Aorta (tissue), 5 donors: ENCODE measurements at regions of chr5 and their contacts with region 1.

Region 1: GRCh38 chr5:125484742-125485641 is 738.6 kb upstream of the ZNF608 start:
- DNase-seq: peak; percentile 81 to 84
- ATAC-seq: peak; percentile 94
- H3K4me3 ChIP-seq: peak overlapping the region in 1 of 2 donors; percentile 34
- H3K27ac ChIP-seq: peak overlapping the region; percentile 92 to 100
- H3K4me1 ChIP-seq: peaks cover 2 to 3% of the 10 kb centered on the region in 2 donors
- H3K27me3 ChIP-seq: no peaks in the 10 kb centered on the region

Region 2: GRCh38 chr5:124902097-124902821 is 582.7 kb before region 1 on chr5:
- intact Hi-C with region 1: loop called in 1 of 2 experiments (anchors 5 kb)
- DNase-seq: no peak
- ATAC-seq: no peak
- H3K4me3 ChIP-seq: no peak overlapping the region
- H3K27ac ChIP-seq: no peak overlapping the region
- H3K4me1 ChIP-seq: peaks cover 0 to 6% of the 10 kb centered on the region in 2 donors
- H3K27me3 ChIP-seq: no peaks in the 10 kb centered on the region

Region 3: GRCh38 chr5:125412561-125413495 is 72.2 kb before region 1 on chr5:
- intact Hi-C with region 1: loop called (anchors 5 kb)
- DNase-seq: peak; percentile 62 to 79
- ATAC-seq: peak; percentile 80
- H3K4me3 ChIP-seq: no peak overlapping the region
- H3K27ac ChIP-seq: no peak overlapping the region
- H3K4me1 ChIP-seq: peaks cover 3 to 17% of the 10 kb centered on the region in 2 donors
- H3K27me3 ChIP-seq: no peaks in the 10 kb centered on the region